ENCODE measurements at regions of chr22 and their contacts with region 1.

Region 1: DNA sequence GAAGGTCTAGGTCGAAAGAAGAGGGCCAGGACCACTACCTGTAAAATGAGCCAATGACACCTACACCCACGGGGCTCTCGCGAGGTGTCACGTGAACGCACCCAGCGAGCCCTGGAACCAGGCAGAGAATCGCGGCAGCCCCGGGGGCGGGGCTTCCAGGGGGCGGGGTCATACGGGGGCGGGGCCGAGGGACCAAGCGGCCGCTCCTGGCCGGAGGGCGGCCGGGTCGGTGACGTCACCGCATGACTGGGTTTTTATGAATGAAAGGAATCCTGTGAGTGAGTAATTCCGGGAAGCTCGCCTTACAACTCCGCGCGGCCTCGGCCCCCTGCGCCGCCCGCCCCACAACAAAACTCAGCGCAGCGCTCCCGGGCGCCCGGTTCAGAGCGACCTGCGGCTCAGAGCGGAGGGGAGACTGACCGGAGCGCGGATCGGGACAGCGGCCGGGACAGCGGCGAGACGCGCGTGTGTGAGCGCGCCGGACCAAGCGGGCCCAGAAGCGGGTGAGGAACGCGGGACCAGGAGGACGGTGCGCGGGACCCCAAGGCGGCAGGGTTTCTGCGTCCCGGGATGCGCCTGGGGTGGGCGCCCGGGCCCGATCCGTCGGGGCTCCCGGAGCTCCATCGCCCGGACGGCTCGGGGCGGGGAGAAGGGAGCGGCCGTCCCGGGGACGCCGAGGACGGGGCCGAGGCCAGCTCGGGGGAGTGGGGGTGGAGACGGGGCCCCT is at the start of gene MAFF:
- DNase-seq: peak; percentile 86 to 91
- ATAC-seq: peak; percentile 74 to 88 (median 76)
- H3K4me3 ChIP-seq: peak within 1 kb of the TSS; percentile 57
- H3K4me3 Mint-ChIP-seq: peak within 1 kb of the TSS; percentile 86
- H3K27ac ChIP-seq: peak within 1 kb of the TSS; percentile 99
- H3K27ac Mint-ChIP-seq: peak within 1 kb of the TSS; percentile 90 to 96
- H3K4me1 ChIP-seq: peaks cover 53% of the 10 kb centered on the region
- H3K4me1 Mint-ChIP-seq: peaks cover 38 to 65% of the 10 kb centered on the region in 2 donors
- H3K27me3 ChIP-seq: no peaks in the 10 kb centered on the region
- H3K27me3 Mint-ChIP-seq: no peaks in the 10 kb centered on the region
- CTCF ChIP-seq: no peak
- total RNA-seq, gene MAFF: 168 to 215 (median 187) TPM

Region 2: DNA sequence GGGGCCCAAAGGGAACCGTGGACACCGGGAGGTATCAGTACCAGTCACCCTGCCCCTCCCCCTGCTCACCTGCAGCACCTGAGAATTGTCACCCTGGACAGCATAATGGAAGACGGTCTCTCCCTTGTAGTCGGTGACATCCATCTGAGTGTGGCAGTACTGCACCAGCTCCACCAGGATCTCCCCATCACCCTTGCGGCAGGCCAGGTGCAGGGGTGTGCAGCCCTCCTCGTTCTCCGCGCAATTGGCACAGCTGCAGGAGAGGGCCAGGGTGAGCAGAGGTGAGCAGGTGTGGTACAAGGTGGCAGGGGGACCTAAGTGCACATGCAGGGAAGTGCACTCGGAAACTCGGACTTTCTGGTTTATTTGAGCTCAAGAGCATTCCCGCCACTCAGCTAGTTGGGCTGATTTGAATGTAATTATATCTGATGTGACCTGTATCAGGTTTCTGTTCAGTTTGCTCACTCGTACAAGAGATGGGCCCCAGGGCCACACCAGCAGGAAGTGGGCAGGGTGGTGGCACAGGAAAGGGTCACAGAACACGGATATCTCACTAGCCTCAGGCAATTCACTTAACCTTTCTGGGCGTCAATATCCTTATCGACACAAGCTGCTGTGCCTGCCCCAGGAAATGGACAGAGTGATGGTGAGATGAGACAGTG is 58.7 kb before region 1 on chr22:
- intact Hi-C with region 1: loop called (anchors 2 kb)
- DNase-seq: peak; percentile 46 to 69
- ATAC-seq: peak; percentile 83 to 94 (median 90)
- H3K4me3 ChIP-seq: peak overlapping the region; percentile 8
- H3K4me3 Mint-ChIP-seq: peak overlapping the region; percentile 77
- H3K27ac ChIP-seq: peak overlapping the region; percentile 99
- H3K27ac Mint-ChIP-seq: peak overlapping the region; percentile 92 to 96
- H3K4me1 ChIP-seq: peaks cover 55% of the 10 kb centered on the region
- H3K4me1 Mint-ChIP-seq: peaks cover 18 to 42% of the 10 kb centered on the region in 2 donors
- H3K27me3 ChIP-seq: no peaks in the 10 kb centered on the region
- H3K27me3 Mint-ChIP-seq: no peaks in the 10 kb centered on the region
- CTCF ChIP-seq: no peak

Region 3: DNA sequence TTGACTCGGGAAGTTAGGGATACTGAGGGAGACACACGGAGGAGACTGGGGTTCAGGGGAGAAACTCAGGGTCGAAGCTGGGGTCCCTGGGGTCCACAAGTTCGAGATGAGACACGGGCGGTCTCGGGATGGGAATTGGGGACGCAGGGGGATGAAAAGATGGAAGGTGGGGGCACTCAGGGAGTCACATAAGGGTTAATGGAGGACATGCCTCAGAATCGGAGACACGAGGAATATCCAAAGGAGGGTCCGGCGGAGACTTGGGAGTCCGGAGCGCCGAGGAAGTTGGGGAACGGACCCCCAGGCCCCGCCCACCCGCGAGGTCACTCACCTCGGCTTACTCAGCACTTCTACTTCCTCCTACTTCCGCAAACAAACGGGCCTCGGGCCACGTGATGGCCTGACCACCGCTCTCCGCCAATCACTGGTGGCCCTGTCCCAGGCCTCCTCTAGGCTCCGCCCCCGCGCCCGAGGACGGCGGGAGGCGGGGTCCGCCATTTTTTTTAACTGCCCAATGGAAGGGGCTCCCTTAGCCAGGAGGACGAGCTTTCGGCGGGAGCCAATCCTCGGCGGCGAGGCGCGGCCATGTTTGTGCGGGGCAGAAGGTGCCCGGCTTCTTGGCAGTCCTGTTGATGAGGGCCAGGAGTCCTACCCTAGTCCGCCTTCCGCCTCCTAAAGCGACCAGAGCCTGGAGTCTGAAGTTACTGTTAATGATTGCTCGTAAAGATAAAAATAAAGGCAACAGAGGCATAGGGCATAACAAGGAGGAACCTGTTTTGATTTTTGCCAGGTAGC is 20.2 kb before region 1 on chr22 and contains the start of gene PLA2G6:
- intact Hi-C with region 1: loop called (anchors 1 kb)
- DNase-seq: peak; percentile 96 to 98
- ATAC-seq: peak; percentile 90 to 99 (median 92)
- H3K4me3 ChIP-seq: peak within 1 kb of the TSS; percentile 59
- H3K4me3 Mint-ChIP-seq: peak within 1 kb of the TSS; percentile 93
- H3K27ac ChIP-seq: peak within 1 kb of the TSS; percentile 75
- H3K27ac Mint-ChIP-seq: peak within 1 kb of the TSS; percentile 89 to 93
- H3K4me1 ChIP-seq: peaks cover 45% of the 10 kb centered on the region
- H3K4me1 Mint-ChIP-seq: peaks cover 39 to 41% of the 10 kb centered on the region in 2 donors
- H3K27me3 ChIP-seq: no peaks in the 10 kb centered on the region
- H3K27me3 Mint-ChIP-seq: no peaks in the 10 kb centered on the region
- CTCF ChIP-seq: no peak
- total RNA-seq, gene PLA2G6: 137 to 167 (median 145) TPM